GM12878 (cell line): ENCODE measurements at regions of chr1 and their contacts with region 1.

Region 1: DNA sequence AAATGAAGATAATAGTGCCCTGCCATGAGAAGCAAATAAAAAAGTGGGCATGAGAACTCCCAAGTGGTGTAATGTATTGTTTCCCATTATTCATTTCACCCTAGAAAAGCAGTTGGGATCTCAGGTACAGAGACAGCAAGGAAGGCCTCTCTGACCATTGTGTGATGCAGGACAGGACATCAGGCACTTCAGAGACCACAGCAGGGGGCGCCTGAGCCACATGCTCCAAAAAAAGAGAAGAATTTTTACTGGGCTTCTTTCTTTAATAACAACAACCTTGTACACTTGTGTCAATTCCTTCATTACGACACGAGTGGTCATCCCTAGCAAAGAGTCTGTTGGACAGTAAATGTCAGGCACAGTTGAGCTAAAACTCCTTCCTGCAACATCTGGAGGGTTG is 533.3 kb downstream of the OMA1 start:
- DNase-seq: no peak
- ATAC-seq: peak; percentile 36; the same call in 1 of the 3 replicates
- H3K4me3 ChIP-seq: no peak overlapping the region
- H3K27ac ChIP-seq: no peak overlapping the region
- H3K4me1 ChIP-seq: no peaks in the 10 kb centered on the region
- H3K27me3 ChIP-seq: no peaks in the 10 kb centered on the region
- CTCF ChIP-seq: peak; percentile 8 to 35 (median 25); a peak in 3 of 6 replicates
- EP300 ChIP-seq: no peak
- POLR2A ChIP-seq: no peak
- RAD21 ChIP-seq: peak; percentile 42

Region 2: GRCh38 chr1:58041621-58042020 is 28.4 kb after region 1 on chr1:
- CTCF ChIA-PET with region 1: interaction called, 4 read pairs
- POLR2A ChIA-PET with region 1: no interaction called
- RAD21 ChIA-PET with region 1: no interaction called
- SMC1A ChIA-PET with region 1: no interaction called
- in situ Hi-C with region 1: no loop called
- intact Hi-C with region 1: loop called (anchors 1 kb)
- DNase-seq: no peak
- ATAC-seq: no peak
- H3K4me3 ChIP-seq: no peak overlapping the region
- H3K27ac ChIP-seq: no peak overlapping the region
- H3K4me1 ChIP-seq: no peaks in the 10 kb centered on the region
- H3K27me3 ChIP-seq: peaks cover 0 to 1% of the 10 kb centered on the region in 2 experiments; a peak in 2 of 4 replicates
- CTCF ChIP-seq: no peak
- EP300 ChIP-seq: no peak
- POLR2A ChIP-seq: no peak
- RAD21 ChIP-seq: no peak